Panc1 (cell line): ENCODE measurements at regions of chr11 and their contacts with region 1.

Region 1: DNA sequence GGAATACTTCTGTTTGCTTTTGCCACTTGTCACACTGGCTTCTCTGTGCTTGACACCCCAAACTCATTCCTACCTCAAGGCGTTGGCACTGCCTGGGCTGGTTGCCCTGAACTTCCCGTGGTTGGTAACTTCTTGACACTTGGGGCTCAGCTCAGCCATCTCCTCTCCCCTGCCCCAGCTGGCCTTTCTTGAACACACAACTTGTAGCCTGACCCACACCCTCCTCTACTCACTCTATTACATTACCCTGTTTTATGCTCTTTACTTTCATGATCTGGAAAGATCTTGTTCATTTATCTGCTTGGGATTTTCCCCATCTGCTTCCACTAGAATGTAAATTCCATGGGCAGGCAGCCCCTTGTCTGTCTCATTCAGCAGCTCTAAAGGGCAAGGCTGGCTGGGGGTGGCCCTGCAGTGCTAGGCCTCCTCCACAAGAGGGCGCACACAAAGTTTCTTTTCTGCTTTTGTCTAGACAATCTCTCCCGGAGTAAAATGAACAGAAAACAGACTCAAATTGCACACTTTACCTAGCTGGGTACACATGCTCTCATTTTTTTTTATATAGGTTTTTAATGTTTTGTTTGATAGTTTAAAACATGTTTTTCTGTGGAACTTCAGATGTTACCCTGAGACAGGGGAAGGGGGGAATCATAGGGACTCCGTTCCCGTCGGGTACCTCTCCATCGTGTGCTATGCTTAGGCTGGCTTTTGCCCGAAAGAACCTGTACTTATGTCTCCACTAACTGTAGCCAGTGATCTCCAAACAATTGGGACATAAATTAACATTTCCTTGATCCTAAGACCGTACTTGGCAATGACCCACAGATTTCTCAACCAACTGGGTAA is 16.4 kb upstream of the MRGPRX2 start:
- DNase-seq: peak; percentile 39
- ATAC-seq: peak; percentile 86
- H3K4me3 ChIP-seq: peak overlapping the region in 1 of 2 experiments; percentile 28; a peak in 2 of 4 replicates
- H3K27ac ChIP-seq: no peak overlapping the region
- H3K4me1 ChIP-seq: no peaks in the 10 kb centered on the region; the same call in 1 of the 2 replicates
- H3K27me3 ChIP-seq: peaks cover 8% of the 10 kb centered on the region; the same call in 1 of the 2 replicates
- CTCF ChIP-seq: peak; percentile 96

Region 2: DNA sequence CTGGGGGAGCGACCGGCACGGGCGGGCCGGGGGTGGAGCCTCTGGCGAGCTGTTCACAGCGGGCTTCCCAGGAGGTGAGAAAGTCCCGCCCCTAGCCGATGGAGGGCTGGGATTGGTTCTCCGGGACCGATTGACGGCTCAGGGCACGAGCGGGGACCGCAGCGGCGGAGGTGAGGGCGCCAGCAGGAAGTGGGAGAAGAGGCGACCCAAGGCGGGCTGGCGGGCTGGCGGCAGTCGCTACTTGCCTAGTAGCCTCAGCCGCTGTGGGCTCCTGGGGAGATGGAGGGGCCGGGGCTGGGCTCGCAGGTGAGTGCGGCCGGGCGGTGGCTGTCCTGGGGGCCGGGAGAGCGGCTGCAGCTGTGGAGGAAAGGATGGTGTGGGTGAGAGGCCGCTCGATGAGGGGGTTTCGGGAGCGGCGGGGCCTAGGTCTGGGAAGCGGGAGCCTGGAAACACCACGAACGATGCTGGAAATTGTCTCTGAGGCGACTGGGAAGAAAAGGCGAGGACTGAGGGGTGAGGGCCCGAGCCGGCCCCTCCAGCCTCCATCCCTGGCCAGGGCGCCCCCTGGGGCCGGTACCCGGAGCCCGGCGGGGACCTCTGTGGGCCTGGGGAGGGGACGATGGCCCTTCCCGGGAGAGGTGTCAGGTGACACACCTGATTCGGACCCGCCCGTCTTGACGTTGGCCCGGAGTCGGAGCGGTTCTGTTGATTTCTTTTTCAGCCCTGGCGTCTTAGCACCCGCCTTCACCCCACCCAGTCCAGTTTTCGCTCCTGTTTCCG is 40.2 kb after region 1 on chr11 and contains the start of gene ZDHHC13:
- CTCF ChIA-PET with region 1: no interaction called
- POLR2A ChIA-PET with region 1: no interaction called
- in situ Hi-C with region 1: no loop called
- intact Hi-C with region 1: loop called (anchors 5 kb)
- DNase-seq: peak; percentile 72
- ATAC-seq: peak; percentile 100
- H3K4me3 ChIP-seq: peak within 1 kb of the TSS; percentile 74 to 85
- H3K27ac ChIP-seq: peak within 1 kb of the TSS; percentile 78
- H3K4me1 ChIP-seq: peaks cover 15% of the 10 kb centered on the region
- H3K27me3 ChIP-seq: peaks cover 2% of the 10 kb centered on the region; the same call in 1 of the 2 replicates
- CTCF ChIP-seq: peak; percentile 77
- total RNA-seq, gene ZDHHC13: 24.3 TPM

Region 3: GRCh38 chr11:19187114-19187832 is 110.3 kb after region 1 on chr11:
- CTCF ChIA-PET with region 1: no interaction called
- POLR2A ChIA-PET with region 1: no interaction called
- in situ Hi-C with region 1: no loop called
- intact Hi-C with region 1: no loop called
- DNase-seq: no peak
- ATAC-seq: no peak
- H3K4me3 ChIP-seq: no peak overlapping the region
- H3K27ac ChIP-seq: no peak overlapping the region
- H3K4me1 ChIP-seq: no peaks in the 10 kb centered on the region
- H3K27me3 ChIP-seq: no peaks in the 10 kb centered on the region
- CTCF ChIP-seq: no peak